ENCODE measurements at regions of chr3 and their contacts with region 1.

Region 1: GRCh38 chr3:194583604-194584318 is 49.5 kb downstream of the TMEM44 start:
- DNase-seq: peak; percentile 84 to 96 (median 92)
- ATAC-seq: peak; percentile 94
- H3K4me3 ChIP-seq: peak overlapping the region; percentile 61
- H3K4me3 Mint-ChIP-seq: peak overlapping the region; percentile 94
- H3K27ac ChIP-seq: peak overlapping the region; percentile 68 to 69
- H3K27ac Mint-ChIP-seq: peak overlapping the region; percentile 95
- H3K4me1 ChIP-seq: peaks cover 14% of the 10 kb centered on the region
- H3K4me1 Mint-ChIP-seq: peaks cover 15% of the 10 kb centered on the region
- H3K27me3 ChIP-seq: no peaks in the 10 kb centered on the region
- H3K27me3 Mint-ChIP-seq: no peaks in the 10 kb centered on the region
- CTCF ChIP-seq: no peak

Region 2: DNA sequence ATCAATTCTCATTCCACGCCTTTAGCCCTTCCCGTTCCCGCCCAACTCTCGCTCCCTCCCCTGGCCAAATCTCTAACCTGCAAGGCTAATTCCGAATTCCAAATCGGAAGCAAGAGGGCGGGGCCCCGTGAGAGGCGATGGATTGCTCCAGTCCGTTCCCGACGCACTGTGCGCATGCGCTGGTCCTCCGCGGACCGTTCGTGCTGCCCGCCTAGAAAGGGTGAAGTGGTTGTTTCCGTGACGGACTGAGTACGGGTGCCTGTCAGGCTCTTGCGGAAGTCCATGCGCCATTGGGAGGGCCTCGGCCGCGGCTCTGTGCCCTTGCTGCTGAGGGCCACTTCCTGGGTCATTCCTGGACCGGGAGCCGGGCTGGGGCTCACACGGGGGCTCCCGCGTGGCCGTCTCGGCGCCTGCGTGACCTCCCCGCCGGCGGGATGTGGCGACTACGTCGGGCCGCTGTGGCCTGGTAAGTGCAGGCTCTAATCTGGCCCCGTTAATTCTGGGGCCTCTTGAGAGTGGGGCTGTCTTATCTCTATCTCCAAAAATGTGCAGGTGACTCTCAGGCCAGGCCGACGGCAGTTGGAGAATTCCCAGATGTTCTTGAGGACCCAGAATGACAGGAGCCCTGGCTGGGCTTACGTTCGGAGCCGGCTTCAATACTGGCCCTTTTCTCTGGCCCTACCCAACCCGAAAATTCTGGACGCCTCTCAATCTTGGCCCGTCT is 990.7 kb before region 1 on chr3 and contains the start of gene OPA1:
- CTCF ChIA-PET with region 1: no interaction called
- POLR2A ChIA-PET with region 1: no interaction called
- intact Hi-C with region 1: loop called in 1 of 2 experiments (anchors 10 kb)
- DNase-seq: peak; percentile 70 to 95 (median 82)
- ATAC-seq: peak; percentile 85
- H3K4me3 ChIP-seq: peak within 1 kb of the TSS; percentile 97
- H3K4me3 Mint-ChIP-seq: peak within 1 kb of the TSS; percentile 92
- H3K27ac ChIP-seq: peak within 1 kb of the TSS; percentile 64 to 88
- H3K27ac Mint-ChIP-seq: peak within 1 kb of the TSS; percentile 83
- H3K4me1 ChIP-seq: peaks cover 26% of the 10 kb centered on the region
- H3K4me1 Mint-ChIP-seq: peaks cover 55% of the 10 kb centered on the region
- H3K27me3 ChIP-seq: no peaks in the 10 kb centered on the region
- H3K27me3 Mint-ChIP-seq: no peaks in the 10 kb centered on the region
- CTCF ChIP-seq: no peak
- total RNA-seq, gene OPA1: 56.1 to 57.6 TPM

Region 3: GRCh38 chr3:194486540-194487288 is 97.0 kb before region 1 on chr3 and contains the start of gene ATP13A3:
- CTCF ChIA-PET with region 1: interaction called, 4 read pairs
- POLR2A ChIA-PET with region 1: interaction called, 18 read pairs
- intact Hi-C with region 1: loop called (anchors 2 kb)
- DNase-seq: peak; percentile 78 to 97 (median 90)
- ATAC-seq: peak; percentile 83
- H3K4me3 ChIP-seq: peak within 1 kb of the TSS; percentile 81
- H3K4me3 Mint-ChIP-seq: peak within 1 kb of the TSS; percentile 97
- H3K27ac ChIP-seq: peak within 1 kb of the TSS; percentile 66 to 76
- H3K27ac Mint-ChIP-seq: peak within 1 kb of the TSS; percentile 89
- H3K4me1 ChIP-seq: peaks cover 34% of the 10 kb centered on the region
- H3K4me1 Mint-ChIP-seq: peaks cover 44% of the 10 kb centered on the region
- H3K27me3 ChIP-seq: no peaks in the 10 kb centered on the region
- H3K27me3 Mint-ChIP-seq: no peaks in the 10 kb centered on the region
- CTCF ChIP-seq: no peak
- total RNA-seq, gene ATP13A3: 46.5 to 52.7 TPM

Region 4: GRCh38 chr3:194536871-194537637 is 46.7 kb before region 1 on chr3:
- CTCF ChIA-PET with region 1: no interaction called
- POLR2A ChIA-PET with region 1: no interaction called
- intact Hi-C with region 1: no loop called
- DNase-seq: peak in 1 of 14 experiments; percentile 20
- ATAC-seq: no peak
- H3K4me3 ChIP-seq: no peak overlapping the region
- H3K4me3 Mint-ChIP-seq: no peak overlapping the region
- H3K27ac ChIP-seq: no peak overlapping the region
- H3K27ac Mint-ChIP-seq: no peak overlapping the region
- H3K4me1 ChIP-seq: no peaks in the 10 kb centered on the region
- H3K4me1 Mint-ChIP-seq: peaks cover 6% of the 10 kb centered on the region
- H3K27me3 ChIP-seq: no peaks in the 10 kb centered on the region
- H3K27me3 Mint-ChIP-seq: no peaks in the 10 kb centered on the region
- CTCF ChIP-seq: no peak

Region 5: DNA sequence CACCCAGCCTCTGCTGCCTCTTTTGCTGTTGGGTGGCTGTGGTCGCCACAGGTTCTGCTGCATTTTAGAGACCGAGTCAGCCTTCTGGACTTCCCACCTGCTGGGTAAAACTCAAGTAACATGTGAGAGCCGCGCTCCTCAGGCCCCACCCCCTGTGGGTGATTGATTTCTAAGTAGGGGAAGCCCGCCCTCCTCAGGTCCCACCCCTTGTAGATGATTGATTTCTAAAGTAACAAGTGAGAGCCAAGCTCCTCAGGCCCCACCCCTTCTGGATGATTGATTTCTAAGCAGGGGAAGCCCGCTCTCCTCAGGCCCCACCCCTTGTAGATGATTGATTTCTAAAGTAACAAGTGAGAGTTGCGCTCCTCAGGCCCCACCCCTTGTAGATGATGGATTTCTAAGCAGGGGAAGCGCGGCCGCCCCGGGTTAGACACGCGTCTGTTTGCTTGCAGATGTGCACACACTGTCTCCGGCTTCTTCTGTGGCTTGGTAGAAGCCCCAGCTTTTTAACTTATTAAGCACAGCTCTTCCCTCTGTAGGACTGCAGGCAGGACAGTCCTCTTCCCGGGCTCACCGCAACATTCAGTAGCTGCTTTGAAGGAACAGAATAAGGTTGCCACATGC is 185.4 kb after region 1 on chr3:
- CTCF ChIA-PET with region 1: no interaction called
- POLR2A ChIA-PET with region 1: no interaction called
- intact Hi-C with region 1: loop called in 1 of 2 experiments (anchors 5 kb)
- DNase-seq: peak; percentile 77 to 98 (median 88)
- ATAC-seq: peak; percentile 97
- H3K4me3 ChIP-seq: peak overlapping the region; percentile 43
- H3K4me3 Mint-ChIP-seq: peak overlapping the region; percentile 87
- H3K27ac ChIP-seq: peak overlapping the region; percentile 51 to 65
- H3K27ac Mint-ChIP-seq: peak overlapping the region; percentile 84
- H3K4me1 ChIP-seq: peaks cover 16% of the 10 kb centered on the region
- H3K4me1 Mint-ChIP-seq: peaks cover 22% of the 10 kb centered on the region
- H3K27me3 ChIP-seq: no peaks in the 10 kb centered on the region
- H3K27me3 Mint-ChIP-seq: peaks cover 5% of the 10 kb centered on the region
- CTCF ChIP-seq: no peak

Measured in CD4-positive, alpha-beta T cell (primary cell).